H1 (cell line): ENCODE measurements at regions of chr5 and their contacts with region 1.

Region 1: DNA sequence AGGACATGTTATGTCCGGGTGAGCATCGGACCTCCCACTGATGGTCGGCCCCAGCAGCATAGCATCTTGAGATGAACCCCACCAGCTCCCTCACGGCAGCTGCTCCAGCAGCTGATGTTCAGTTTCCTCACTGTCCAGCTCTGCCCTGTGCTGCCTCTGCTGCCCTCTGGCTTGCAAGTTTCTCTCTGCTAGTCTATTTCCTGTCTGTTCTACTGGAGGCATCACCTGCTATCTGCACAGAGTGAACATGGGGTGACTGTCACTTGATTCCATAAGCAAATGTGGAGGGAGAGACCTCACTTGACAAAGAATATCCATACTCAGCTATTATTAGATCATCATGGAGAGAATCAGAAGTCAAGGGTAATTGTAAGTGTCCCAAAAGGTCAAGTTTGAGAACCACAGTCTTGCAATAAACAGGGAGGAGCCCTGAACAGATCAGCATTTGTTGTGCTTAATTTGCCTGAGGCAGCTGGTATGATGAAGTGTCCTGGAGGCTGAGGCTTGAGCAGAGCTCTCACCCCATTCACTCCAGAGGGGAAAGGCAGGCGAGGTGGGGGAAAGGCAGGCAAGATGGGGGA is 702.8 kb downstream of the SEMA5A start:
- DNase-seq: no peak
- H3K4me3 ChIP-seq: no peak overlapping the region
- H3K27ac ChIP-seq: no peak overlapping the region
- H3K4me1 ChIP-seq: no peaks in the 10 kb centered on the region; a peak in 1 of 7 replicates
- H3K27me3 ChIP-seq: no peaks in the 10 kb centered on the region; a peak in 1 of 7 replicates
- CTCF ChIP-seq: peak; percentile 25 to 39 (median 32); a peak in 3 of 4 replicates
- EP300 ChIP-seq: no peak
- POLR2A ChIP-seq: no peak
- RAD21 ChIP-seq: peak; percentile 42 to 45

Region 2: GRCh38 chr5:8756498-8757084 is 86.5 kb before region 1 on chr5:
- CTCF ChIA-PET with region 1: interaction called, 32 read pairs
- POLR2A ChIA-PET with region 1: no interaction called
- DNase-seq: peak in 1 of 2 experiments; percentile 3
- H3K4me3 ChIP-seq: no peak overlapping the region
- H3K27ac ChIP-seq: no peak overlapping the region
- H3K4me1 ChIP-seq: no peaks in the 10 kb centered on the region
- H3K27me3 ChIP-seq: no peaks in the 10 kb centered on the region
- CTCF ChIP-seq: peak in 2 of 3 experiments; percentile 57 to 68; a peak in 3 of 4 replicates
- EP300 ChIP-seq: no peak
- POLR2A ChIP-seq: no peak
- RAD21 ChIP-seq: peak; percentile 89 to 91

Region 3: DNA sequence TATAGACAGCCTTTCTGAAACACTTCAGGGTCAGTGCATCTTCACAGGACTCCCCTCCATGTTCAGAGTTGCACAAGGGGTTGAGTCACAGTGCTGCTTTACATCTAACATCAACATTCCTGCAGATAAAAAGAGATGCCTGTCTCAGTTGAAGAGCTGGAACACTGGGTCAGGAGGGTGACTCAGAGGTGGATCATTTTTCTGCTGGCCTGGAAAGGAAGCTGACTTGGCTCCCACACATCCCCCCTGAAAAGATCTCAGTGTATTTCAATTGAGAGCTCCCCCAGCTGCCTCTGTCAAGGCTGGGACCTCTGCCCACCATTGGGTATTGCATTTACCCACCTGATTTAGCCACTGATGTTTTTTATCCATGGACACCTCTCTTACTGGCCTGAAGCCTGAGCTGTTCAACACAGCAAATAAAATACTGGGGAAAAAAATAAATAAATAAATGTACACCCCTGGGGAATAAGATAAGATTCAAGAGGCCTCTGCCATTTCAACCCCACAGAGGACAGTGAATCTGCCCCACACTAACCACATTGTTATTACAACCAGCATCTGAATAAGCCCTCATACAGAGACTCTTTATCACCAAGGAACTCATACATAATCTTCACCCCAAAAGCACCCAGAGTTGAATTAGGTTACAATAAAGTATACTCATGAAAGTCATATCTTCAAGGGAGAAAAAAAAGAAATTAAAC is 13.6 kb before region 1 on chr5:
- CTCF ChIA-PET with region 1: interaction called, 26 read pairs
- POLR2A ChIA-PET with region 1: interaction called, 3 read pairs
- DNase-seq: no peak
- H3K4me3 ChIP-seq: no peak overlapping the region
- H3K27ac ChIP-seq: no peak overlapping the region
- H3K4me1 ChIP-seq: no peaks in the 10 kb centered on the region; a peak in 1 of 7 replicates
- H3K27me3 ChIP-seq: no peaks in the 10 kb centered on the region
- CTCF ChIP-seq: no peak
- EP300 ChIP-seq: no peak
- POLR2A ChIP-seq: no peak
- RAD21 ChIP-seq: no peak

Region 4: DNA sequence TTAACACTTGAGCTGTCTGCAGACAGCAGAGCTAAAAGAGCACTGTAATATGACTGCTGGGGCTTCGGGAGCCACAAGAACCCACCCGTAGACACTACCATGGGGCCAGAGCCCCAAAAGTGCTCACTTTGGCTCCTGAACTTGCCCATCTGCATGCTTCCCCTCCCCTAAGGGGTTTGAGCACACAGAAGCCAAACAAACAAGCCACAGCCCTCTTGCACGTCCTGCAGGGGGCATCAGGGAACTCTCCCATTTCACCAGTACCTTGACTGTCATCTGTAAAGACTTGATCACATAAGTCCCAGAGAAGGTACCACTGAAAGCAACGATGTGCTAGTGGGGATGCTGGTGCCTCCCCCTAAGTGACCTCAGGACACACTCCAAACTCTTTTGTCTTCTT is 21.0 kb after region 1 on chr5:
- CTCF ChIA-PET with region 1: interaction called, 10 read pairs
- POLR2A ChIA-PET with region 1: no interaction called
- DNase-seq: peak; percentile 43 to 64
- H3K4me3 ChIP-seq: no peak overlapping the region
- H3K27ac ChIP-seq: no peak overlapping the region
- H3K4me1 ChIP-seq: no peaks in the 10 kb centered on the region
- H3K27me3 ChIP-seq: no peaks in the 10 kb centered on the region
- CTCF ChIP-seq: peak; percentile 72 to 88 (median 79)
- EP300 ChIP-seq: no peak
- POLR2A ChIP-seq: no peak
- RAD21 ChIP-seq: peak; percentile 66 to 76